ENCODE measurements at regions of chr11 and their contacts with region 1.

Region 1: DNA sequence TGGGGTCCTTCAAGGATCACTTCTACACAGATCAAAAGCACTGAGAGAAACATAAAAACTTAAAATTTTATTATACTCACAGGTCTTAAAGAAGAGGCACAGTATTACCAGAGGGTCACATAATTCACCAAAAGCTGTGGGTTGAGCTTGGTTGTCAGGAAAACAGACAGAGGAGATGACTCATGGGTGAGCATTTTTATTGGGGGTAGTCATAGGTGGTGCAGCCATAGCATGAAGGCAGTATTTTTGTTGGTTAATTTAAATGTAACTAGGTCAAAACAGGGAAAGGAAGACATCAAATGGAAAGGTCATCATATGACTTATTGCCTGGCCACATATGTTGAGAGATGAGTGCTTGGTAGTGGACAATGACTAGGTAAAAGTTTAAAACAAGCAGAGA is 24.2 kb downstream of the OR5B17 start:
- DNase-seq: no peak
- H3K4me3 ChIP-seq: no peak overlapping the region
- CTCF ChIP-seq: no peak
- POLR2A ChIP-seq: no peak

Region 2: GRCh38 chr11:58391879-58392278 is 57.2 kb after region 1 on chr11:
- intact Hi-C with region 1: loop called (anchors 2 kb)
- DNase-seq: no peak
- H3K4me3 ChIP-seq: no peak overlapping the region
- CTCF ChIP-seq: no peak
- POLR2A ChIP-seq: no peak

Region 3: GRCh38 chr11:58446294-58446693 is 111.6 kb after region 1 on chr11:
- intact Hi-C with region 1: no loop called
- DNase-seq: no peak
- H3K4me3 ChIP-seq: no peak overlapping the region
- CTCF ChIP-seq: no peak
- POLR2A ChIP-seq: no peak

Region 4: GRCh38 chr11:58688789-58689503 is 354.2 kb after region 1 on chr11:
- intact Hi-C with region 1: no loop called
- DNase-seq: no peak
- H3K4me3 ChIP-seq: no peak overlapping the region
- CTCF ChIP-seq: no peak
- POLR2A ChIP-seq: no peak

Measured in lower leg skin (tissue), 4 donors.